Activated CD4-positive, alpha-beta T cell treated with anti-CD3 and anti-CD28 coated beads for 36 hours (primary cell): ENCODE measurements at regions of chr3 and their contacts with region 1.

Region 1: DNA sequence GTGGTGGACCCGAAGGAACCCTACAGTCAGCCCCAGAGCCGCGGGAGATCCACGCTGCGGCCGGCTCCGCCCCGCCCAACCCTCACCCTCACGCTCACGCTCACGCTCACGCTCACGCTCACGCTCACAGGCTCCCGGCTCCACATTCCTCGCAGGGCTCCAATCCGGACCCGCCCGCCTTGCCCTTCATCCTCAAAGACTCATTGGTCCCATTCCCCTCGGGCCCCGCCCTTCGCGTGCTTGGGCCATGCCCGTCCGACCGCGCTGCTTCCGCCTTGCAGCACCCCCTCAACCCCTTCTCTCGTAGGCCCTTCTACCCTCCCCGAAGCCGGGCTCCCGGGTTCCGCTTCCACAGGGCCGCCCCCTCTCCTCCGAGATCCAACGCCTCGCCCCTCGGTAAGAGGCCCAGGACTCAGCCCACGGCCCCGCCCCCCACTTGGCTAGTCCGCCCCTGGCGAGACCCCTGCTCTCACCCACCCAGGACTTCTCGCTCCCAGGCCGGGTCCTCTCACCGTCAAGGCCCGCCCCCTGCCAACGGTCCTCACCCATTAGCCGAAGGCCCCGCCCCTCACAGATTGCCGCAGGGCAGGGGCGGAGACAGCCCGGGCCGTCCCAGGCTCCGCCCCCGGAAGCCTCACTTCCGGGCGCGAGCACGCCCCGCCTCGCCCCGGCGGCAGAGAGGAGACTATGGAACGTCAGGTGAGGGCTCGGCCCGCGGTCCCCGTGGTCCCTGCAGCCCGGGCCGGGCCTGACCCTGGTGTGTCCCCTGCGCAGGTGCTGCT is at the start of gene APEH:
- DNase-seq: peak; percentile 99
- ATAC-seq: peak; percentile 91
- H3K4me3 Mint-ChIP-seq: peak within 1 kb of the TSS; percentile 88
- H3K27ac Mint-ChIP-seq: peak within 1 kb of the TSS; percentile 94
- H3K4me1 Mint-ChIP-seq: peaks cover 29% of the 10 kb centered on the region
- H3K27me3 Mint-ChIP-seq: no peaks in the 10 kb centered on the region
- total RNA-seq, gene APEH: 110 to 137 TPM

Region 2: GRCh38 chr3:48918388-48919214 is 755.3 kb before region 1 on chr3 and contains the start of gene ARIH2:
- CTCF ChIA-PET with region 1: no interaction called
- POLR2A ChIA-PET with region 1: no interaction called
- intact Hi-C with region 1: loop called in 1 of 2 experiments (anchors 5 kb)
- DNase-seq: peak; percentile 94
- ATAC-seq: peak; percentile 75
- H3K4me3 Mint-ChIP-seq: peak within 1 kb of the TSS; percentile 90
- H3K27ac Mint-ChIP-seq: peak within 1 kb of the TSS; percentile 100
- H3K4me1 Mint-ChIP-seq: peaks cover 30% of the 10 kb centered on the region
- H3K27me3 Mint-ChIP-seq: no peaks in the 10 kb centered on the region
- total RNA-seq, gene ARIH2: 105 to 112 TPM

Region 3: GRCh38 chr3:49120438-49121131 is 553.3 kb before region 1 on chr3 and contains the start of gene USP19:
- CTCF ChIA-PET with region 1: no interaction called
- POLR2A ChIA-PET with region 1: no interaction called
- intact Hi-C with region 1: loop called in 1 of 2 experiments (anchors 1 kb)
- DNase-seq: peak; percentile 97
- ATAC-seq: peak; percentile 97
- H3K4me3 Mint-ChIP-seq: peak within 1 kb of the TSS; percentile 87
- H3K27ac Mint-ChIP-seq: peak within 1 kb of the TSS; percentile 88
- H3K4me1 Mint-ChIP-seq: peaks cover 19% of the 10 kb centered on the region
- H3K27me3 Mint-ChIP-seq: no peaks in the 10 kb centered on the region
- total RNA-seq, gene USP19: 45.2 to 45.9 TPM

Region 4: DNA sequence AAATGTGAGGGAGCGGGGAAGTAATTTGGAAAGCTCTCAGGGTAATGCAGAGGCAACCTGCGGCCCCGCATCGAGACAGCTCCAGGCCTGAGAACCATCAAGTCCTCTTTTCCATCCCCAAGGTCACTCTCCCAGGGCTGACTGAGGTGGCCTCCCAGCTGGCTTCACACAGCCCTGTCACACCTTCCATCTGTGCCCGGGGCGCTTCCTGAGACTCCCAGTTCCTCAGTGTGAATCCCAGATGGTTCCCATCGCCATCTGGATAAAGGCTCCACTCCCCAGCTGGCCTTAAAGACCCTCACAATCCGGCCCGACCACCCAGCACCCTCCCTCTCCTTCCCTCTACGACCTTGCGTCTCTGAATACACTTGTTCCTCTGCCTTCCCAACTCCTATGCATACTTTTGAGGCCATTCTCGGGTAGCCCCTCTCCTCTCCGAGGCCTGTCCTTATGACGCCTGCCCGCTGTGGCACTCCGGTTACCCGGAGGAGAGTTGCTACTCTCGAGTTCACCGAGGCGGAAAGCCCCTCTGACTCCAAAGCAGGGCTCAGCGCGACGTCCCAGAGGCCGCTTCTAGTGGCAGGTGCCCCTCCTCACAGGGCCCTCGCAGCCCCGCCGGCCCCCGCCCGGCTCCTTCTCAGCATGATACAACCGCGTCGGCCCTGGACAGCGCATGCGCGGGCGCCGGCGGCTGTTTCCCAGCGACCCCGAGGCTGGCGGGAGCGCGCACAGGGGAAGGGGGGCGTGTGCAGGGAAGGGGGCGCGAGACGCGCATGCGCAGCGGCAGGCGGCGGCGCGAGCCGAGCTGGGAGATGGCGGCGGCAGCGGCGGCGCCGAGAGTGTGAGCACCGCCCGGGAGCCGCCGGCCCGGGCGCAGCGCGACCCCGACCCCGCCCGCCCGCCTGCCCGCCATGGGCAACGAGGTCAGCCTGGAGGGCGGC is 119.9 kb before region 1 on chr3 and contains the start of gene BSN:
- CTCF ChIA-PET with region 1: interaction called, 13 read pairs
- POLR2A ChIA-PET with region 1: no interaction called
- intact Hi-C with region 1: loop called in 1 of 2 experiments (anchors 1 kb)
- DNase-seq: peak; percentile 95
- ATAC-seq: peak; percentile 92
- H3K4me3 Mint-ChIP-seq: peak within 1 kb of the TSS; percentile 72
- H3K27ac Mint-ChIP-seq: peak within 1 kb of the TSS; percentile 24
- H3K4me1 Mint-ChIP-seq: peaks cover 11% of the 10 kb centered on the region
- H3K27me3 Mint-ChIP-seq: peaks cover 34% of the 10 kb centered on the region
- total RNA-seq, gene BSN: 0.09 to 0.11 TPM

Region 5: GRCh38 chr3:49609815-49610214 is 64.1 kb before region 1 on chr3:
- CTCF ChIA-PET with region 1: no interaction called
- POLR2A ChIA-PET with region 1: no interaction called
- intact Hi-C with region 1: no loop called
- DNase-seq: no peak
- ATAC-seq: no peak
- H3K4me3 Mint-ChIP-seq: no peak overlapping the region
- H3K27ac Mint-ChIP-seq: no peak overlapping the region
- H3K4me1 Mint-ChIP-seq: no peaks in the 10 kb centered on the region
- H3K27me3 Mint-ChIP-seq: no peaks in the 10 kb centered on the region

Region 6: GRCh38 chr3:49661281-49661680 is 12.6 kb before region 1 on chr3:
- CTCF ChIA-PET with region 1: no interaction called
- POLR2A ChIA-PET with region 1: no interaction called
- intact Hi-C with region 1: no loop called
- DNase-seq: no peak
- ATAC-seq: no peak
- H3K4me3 Mint-ChIP-seq: no peak overlapping the region
- H3K27ac Mint-ChIP-seq: no peak overlapping the region
- H3K4me1 Mint-ChIP-seq: no peaks in the 10 kb centered on the region
- H3K27me3 Mint-ChIP-seq: peaks cover 2% of the 10 kb centered on the region

Region 7: DNA sequence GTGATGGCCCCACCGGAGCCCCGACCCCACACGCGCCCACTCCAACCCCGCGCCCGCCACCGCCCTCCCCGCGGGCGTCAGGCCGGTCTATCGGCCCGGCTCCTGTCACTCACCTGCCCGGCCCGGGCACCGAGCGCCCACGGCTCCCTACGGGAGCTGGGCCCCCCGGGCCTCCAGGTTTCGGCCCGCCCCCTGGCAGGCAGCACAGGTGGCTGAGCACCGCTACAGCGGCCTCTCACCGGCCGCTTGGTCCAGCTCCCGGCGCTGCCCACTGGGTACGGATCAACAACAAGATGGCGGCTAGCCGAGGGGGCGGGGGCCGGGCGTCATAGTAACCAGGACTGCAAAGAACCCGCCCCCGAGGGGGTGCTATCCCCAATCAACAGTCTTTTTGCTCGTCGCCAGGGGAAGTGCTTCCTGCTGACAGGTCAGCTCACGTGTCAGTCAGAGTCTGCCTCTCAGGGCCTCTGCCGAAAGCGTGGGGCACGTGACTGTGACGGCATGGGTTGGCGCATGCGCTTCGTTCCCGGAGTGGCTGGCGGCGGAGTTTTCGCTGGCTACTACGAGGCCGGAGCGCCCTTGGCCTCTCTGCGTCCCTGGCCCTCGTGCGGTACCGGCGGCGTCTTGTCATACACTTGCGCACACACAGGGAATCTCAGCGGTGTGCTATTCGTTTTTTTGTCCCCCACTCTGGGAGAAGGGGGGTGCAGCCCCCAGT is 112.5 kb after region 1 on chr3 and contains the start of gene IP6K1:
- CTCF ChIA-PET with region 1: interaction called, 3 read pairs
- POLR2A ChIA-PET with region 1: no interaction called
- intact Hi-C with region 1: loop called in 1 of 2 experiments (anchors 1 kb)
- DNase-seq: peak; percentile 100
- ATAC-seq: peak; percentile 100
- H3K4me3 Mint-ChIP-seq: peak within 1 kb of the TSS; percentile 90
- H3K27ac Mint-ChIP-seq: peak within 1 kb of the TSS; percentile 96
- H3K4me1 Mint-ChIP-seq: peaks cover 37% of the 10 kb centered on the region
- H3K27me3 Mint-ChIP-seq: no peaks in the 10 kb centered on the region
- total RNA-seq, gene IP6K1: 29.1 to 31.0 TPM

Region 8: DNA sequence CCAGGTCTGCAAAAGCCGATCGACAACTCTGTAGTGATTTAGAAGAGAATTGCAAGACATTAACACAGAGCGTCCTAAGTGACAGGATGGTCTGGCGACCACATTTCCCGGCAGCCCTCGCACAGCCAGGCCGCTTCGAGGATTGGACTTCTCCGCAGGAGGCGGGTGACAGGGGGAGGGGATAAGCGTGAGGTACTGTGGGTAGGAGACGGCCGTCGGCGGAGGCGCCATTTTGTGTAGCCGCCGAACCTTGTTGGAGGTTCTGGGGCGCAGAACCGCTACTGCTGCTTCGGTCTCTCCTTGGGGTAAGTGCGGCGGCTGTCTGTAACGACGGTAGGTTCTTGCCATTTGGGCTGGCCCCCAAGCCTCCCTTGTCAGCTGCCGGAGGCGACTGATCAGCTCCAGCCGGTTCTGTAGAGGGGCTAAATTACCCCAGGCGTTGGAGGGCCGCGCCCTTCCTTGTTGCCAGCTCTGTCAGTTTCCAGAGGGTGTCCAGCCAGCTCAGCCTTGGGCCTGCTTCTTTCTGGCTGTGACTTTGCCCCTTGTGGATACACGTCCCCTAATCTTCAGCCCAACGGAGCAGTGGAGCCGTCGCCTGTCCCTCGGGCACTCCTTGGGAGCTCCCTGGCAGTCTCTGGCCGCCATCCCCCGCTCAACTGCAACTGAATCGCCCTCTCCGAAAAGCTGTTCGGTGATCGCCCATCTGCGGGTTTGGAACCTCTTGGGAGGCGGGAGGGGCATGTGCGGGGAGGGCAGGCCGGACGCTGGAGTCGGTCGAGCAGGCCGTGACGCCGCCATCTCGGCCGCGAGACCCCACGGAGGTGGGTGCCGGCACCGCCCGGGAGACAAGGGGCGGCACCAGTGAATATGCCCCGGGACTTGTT is 415.1 kb after region 1 on chr3 and contains the start of gene RBM5:
- CTCF ChIA-PET with region 1: no interaction called
- POLR2A ChIA-PET with region 1: no interaction called
- intact Hi-C with region 1: loop called in 1 of 2 experiments (anchors 1 kb)
- DNase-seq: peak; percentile 97
- ATAC-seq: peak; percentile 100
- H3K4me3 Mint-ChIP-seq: peak within 1 kb of the TSS; percentile 99
- H3K27ac Mint-ChIP-seq: peak within 1 kb of the TSS; percentile 97
- H3K4me1 Mint-ChIP-seq: peaks cover 28% of the 10 kb centered on the region
- H3K27me3 Mint-ChIP-seq: no peaks in the 10 kb centered on the region
- total RNA-seq, gene RBM5: 118 to 131 TPM